Caco-2 (cell line): ENCODE measurements at regions of chr14 and their contacts with region 1.

Region 1: DNA sequence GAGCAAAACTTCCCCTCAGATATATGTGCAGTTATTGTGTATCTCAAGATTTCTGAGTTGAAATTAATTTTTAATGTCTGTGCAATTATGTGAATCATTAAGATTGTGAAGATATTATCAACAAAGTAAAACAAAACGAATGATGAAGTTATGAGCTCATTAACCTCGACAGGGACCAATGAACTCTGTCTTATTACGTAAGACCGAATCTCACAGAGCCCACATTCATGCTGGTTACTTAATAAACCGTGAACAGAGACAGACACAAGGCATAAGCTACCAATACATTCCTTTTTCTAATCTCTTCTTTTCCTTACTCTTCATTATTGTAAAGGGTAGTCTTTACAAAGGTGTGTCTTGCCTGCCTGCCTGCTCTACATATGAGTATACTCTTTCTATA is 568.7 kb downstream of the RPS29 start:
- DNase-seq: no peak
- H3K4me3 ChIP-seq: no peak overlapping the region
- H3K4me3 Mint-ChIP-seq: no peak overlapping the region
- H3K27ac Mint-ChIP-seq: no peak overlapping the region
- H3K4me1 ChIP-seq: peaks cover 36% of the 10 kb centered on the region
- H3K4me1 Mint-ChIP-seq: peaks cover 23% of the 10 kb centered on the region
- H3K27me3 ChIP-seq: no peaks in the 10 kb centered on the region
- H3K27me3 Mint-ChIP-seq: no peaks in the 10 kb centered on the region
- CTCF ChIP-seq: no peak

Region 2: DNA sequence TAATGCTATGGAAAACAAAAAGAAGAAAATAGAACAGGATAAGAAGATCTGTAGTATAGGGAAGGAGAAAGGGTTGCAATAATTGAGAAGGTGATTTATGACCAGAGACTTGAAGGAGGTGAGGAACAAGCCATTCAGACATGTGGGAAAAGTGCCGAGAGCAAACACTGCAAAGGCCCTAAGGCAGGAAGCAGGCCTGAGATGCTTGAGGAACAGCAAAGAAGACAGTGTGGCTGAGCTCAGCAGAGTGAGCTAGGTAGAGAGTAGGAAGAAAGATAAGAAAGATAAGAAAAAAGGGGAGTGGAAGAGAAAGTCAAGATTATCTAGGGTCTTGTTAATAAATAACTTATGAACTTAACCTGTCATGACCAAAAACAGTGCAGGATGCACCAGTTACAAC is 103.1 kb before region 1 on chr14:
- CTCF ChIA-PET with region 1: no interaction called
- POLR2A ChIA-PET with region 1: no interaction called
- intact Hi-C with region 1: loop called (anchors 1 kb)
- DNase-seq: peak; percentile 69 to 88
- H3K4me3 ChIP-seq: no peak overlapping the region
- H3K4me3 Mint-ChIP-seq: no peak overlapping the region
- H3K27ac Mint-ChIP-seq: no peak overlapping the region
- H3K4me1 ChIP-seq: peaks cover 29% of the 10 kb centered on the region
- H3K4me1 Mint-ChIP-seq: peaks cover 24% of the 10 kb centered on the region
- H3K27me3 ChIP-seq: no peaks in the 10 kb centered on the region
- H3K27me3 Mint-ChIP-seq: no peaks in the 10 kb centered on the region
- CTCF ChIP-seq: no peak

Region 3: GRCh38 chr14:48970803-48971394 is 46.5 kb before region 1 on chr14:
- CTCF ChIA-PET with region 1: no interaction called
- POLR2A ChIA-PET with region 1: no interaction called
- intact Hi-C with region 1: loop called (anchors 2 kb)
- DNase-seq: peak in 1 of 2 experiments; percentile 10
- H3K4me3 ChIP-seq: no peak overlapping the region
- H3K4me3 Mint-ChIP-seq: no peak overlapping the region
- H3K27ac Mint-ChIP-seq: peak overlapping the region; percentile 57
- H3K4me1 ChIP-seq: peaks cover 84% of the 10 kb centered on the region
- H3K4me1 Mint-ChIP-seq: peaks cover 55% of the 10 kb centered on the region
- H3K27me3 ChIP-seq: no peaks in the 10 kb centered on the region
- H3K27me3 Mint-ChIP-seq: no peaks in the 10 kb centered on the region
- CTCF ChIP-seq: no peak

Region 4: GRCh38 chr14:48983351-48983888 is 34.0 kb before region 1 on chr14:
- CTCF ChIA-PET with region 1: no interaction called
- POLR2A ChIA-PET with region 1: no interaction called
- intact Hi-C with region 1: loop called (anchors 1 kb)
- DNase-seq: peak; percentile 47 to 69
- H3K4me3 ChIP-seq: no peak overlapping the region
- H3K4me3 Mint-ChIP-seq: no peak overlapping the region
- H3K27ac Mint-ChIP-seq: no peak overlapping the region
- H3K4me1 ChIP-seq: peaks cover 22% of the 10 kb centered on the region
- H3K4me1 Mint-ChIP-seq: peaks cover 5% of the 10 kb centered on the region
- H3K27me3 ChIP-seq: no peaks in the 10 kb centered on the region
- H3K27me3 Mint-ChIP-seq: no peaks in the 10 kb centered on the region
- CTCF ChIP-seq: no peak

Region 5: GRCh38 chr14:49106741-49107667 is 89.6 kb after region 1 on chr14:
- CTCF ChIA-PET with region 1: no interaction called
- POLR2A ChIA-PET with region 1: no interaction called
- intact Hi-C with region 1: loop called (anchors 2 kb)
- DNase-seq: peak; percentile 80 to 91
- H3K4me3 ChIP-seq: no peak overlapping the region; the same call in 1 of the 2 replicates
- H3K4me3 Mint-ChIP-seq: peak overlapping the region; percentile 42
- H3K27ac Mint-ChIP-seq: peak overlapping the region; percentile 76
- H3K4me1 ChIP-seq: peaks cover 32% of the 10 kb centered on the region
- H3K4me1 Mint-ChIP-seq: peaks cover 24% of the 10 kb centered on the region
- H3K27me3 ChIP-seq: no peaks in the 10 kb centered on the region
- H3K27me3 Mint-ChIP-seq: no peaks in the 10 kb centered on the region
- CTCF ChIP-seq: peak in 1 of 2 experiments; percentile 17